ENCODE measurements at regions of chr2 and their contacts with region 1.

Region 1: GRCh38 chr2:71379088-71379487 is 47.5 kb downstream of the ZNF638 start:
- DNase-seq: peak; percentile 17
- ATAC-seq: no peak
- H3K4me3 ChIP-seq: no peak overlapping the region
- H3K27ac ChIP-seq: no peak overlapping the region
- H3K4me1 ChIP-seq: no peaks in the 10 kb centered on the region; the same call in 1 of the 2 replicates
- H3K27me3 ChIP-seq: no peaks in the 10 kb centered on the region
- CTCF ChIP-seq: no peak

Region 2: GRCh38 chr2:69946351-69947077 is 1432.6 kb before region 1 on chr2:
- CTCF ChIA-PET with region 1: no interaction called
- POLR2A ChIA-PET with region 1: no interaction called
- in situ Hi-C with region 1: no loop called
- intact Hi-C with region 1: no loop called
- DNase-seq: peak; percentile 83
- ATAC-seq: peak; percentile 88
- H3K4me3 ChIP-seq: peak overlapping the region in 1 of 2 experiments; percentile 31; a peak in 2 of 4 replicates
- H3K27ac ChIP-seq: peak overlapping the region; percentile 62
- H3K4me1 ChIP-seq: peaks cover 23% of the 10 kb centered on the region
- H3K27me3 ChIP-seq: no peaks in the 10 kb centered on the region
- CTCF ChIP-seq: no peak

Region 3: DNA sequence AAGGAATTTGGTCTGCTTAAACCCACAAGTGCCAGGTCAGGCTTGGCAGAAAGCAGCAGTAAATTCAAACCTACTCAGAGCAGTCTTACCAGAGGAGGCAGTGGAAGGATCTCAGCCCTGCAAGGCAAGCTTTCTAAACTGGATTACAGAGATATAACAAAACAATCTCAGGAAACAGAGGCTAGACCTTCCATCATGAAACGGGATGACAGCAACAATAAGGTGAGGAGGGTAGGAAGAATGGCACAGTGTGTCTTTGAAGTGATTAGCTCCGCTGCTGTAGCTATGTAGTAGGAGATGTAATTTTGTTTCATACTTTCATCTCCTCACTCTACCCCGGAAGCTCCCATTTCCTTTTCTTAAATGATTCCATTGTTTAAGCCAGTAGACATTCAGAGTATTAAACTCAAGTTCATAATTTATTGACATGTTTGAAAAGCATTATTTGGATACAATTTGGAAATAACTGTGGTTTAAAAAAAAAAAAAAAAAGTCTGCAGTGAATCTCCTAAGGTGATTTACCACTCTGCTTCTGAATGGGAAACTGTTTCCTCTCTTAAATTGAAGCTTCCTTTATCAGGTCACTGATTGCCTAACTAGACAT is 44.8 kb after region 1 on chr2:
- CTCF ChIA-PET with region 1: no interaction called
- POLR2A ChIA-PET with region 1: interaction called, 13 read pairs
- in situ Hi-C with region 1: no loop called
- intact Hi-C with region 1: no loop called
- DNase-seq: no peak
- ATAC-seq: no peak
- H3K4me3 ChIP-seq: no peak overlapping the region
- H3K27ac ChIP-seq: no peak overlapping the region
- H3K4me1 ChIP-seq: no peaks in the 10 kb centered on the region; the same call in 1 of the 2 replicates
- H3K27me3 ChIP-seq: no peaks in the 10 kb centered on the region
- CTCF ChIP-seq: no peak

Measured in Panc1 (cell line).